CD8-positive, alpha-beta memory T cell (primary cell): ENCODE measurements at regions of chr1 and their contacts with region 1.

Region 1: DNA sequence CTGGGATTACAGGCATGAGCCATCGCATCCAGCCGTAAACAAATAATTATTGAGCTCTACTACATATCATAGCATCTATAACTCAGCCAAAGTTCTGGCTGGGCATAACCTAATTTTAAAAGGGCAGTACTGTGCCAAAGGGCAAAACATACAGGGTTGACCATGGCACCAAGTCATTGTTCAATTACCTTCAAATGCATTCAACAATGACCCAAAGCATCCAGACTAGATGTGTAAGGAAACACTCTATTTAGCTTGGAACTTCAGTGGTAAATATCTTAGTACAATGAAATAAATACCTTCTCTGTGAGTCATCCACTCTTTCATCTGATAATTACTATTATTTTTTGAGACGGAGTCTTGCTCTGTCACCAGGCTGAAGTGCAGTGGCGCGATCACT is 70.0 kb downstream of the NVL start:
- DNase-seq: no peak
- H3K4me3 ChIP-seq: no peak overlapping the region
- H3K4me3 Mint-ChIP-seq: no peak overlapping the region
- H3K27ac ChIP-seq: no peak overlapping the region
- H3K27ac Mint-ChIP-seq: no peak overlapping the region
- H3K4me1 ChIP-seq: peaks cover 13% of the 10 kb centered on the region
- H3K4me1 Mint-ChIP-seq: peaks cover 3 to 20% (median 8%) of the 10 kb centered on the region in 3 donors
- H3K27me3 ChIP-seq: no peaks in the 10 kb centered on the region
- H3K27me3 Mint-ChIP-seq: no peaks in the 10 kb centered on the region

Region 2: DNA sequence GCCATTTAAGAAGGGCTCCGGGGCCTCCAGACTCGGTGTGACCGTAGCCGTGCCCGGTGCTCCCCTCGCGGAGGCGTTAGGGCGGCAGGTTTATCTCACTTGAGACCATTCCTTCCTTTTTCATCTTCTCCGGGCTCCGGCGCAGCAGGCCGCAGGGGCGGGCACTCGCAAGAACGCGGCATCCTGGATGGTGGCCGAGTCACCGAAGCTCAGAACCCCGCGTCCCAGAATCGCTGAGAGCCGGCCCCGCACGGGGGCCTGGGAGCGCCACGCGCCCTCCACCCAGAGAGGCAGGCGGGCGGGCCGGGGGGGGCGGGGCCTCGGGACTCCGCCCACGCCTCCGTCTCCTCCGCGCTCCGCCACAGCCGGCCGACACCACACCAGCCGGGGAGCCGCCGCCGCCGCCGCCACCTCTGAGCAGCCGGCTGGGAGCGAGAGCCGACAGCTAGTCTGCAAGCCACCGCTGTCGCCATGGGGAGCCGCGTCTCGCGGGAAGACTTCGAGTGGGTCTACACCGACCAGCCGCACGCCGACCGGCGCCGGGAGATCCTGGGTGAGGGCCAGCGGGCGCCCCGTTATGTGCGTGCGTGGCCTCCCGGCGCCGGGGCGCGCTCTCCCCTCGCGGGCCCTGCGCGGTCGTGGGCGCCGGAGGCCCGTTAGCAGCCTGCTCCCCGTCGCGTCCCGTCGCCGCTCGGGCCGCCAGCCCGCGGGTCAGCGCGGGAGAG is 76.9 kb before region 1 on chr1 and contains the start of gene DEGS1:
- CTCF ChIA-PET with region 1: no interaction called
- POLR2A ChIA-PET with region 1: interaction called, 13 read pairs
- DNase-seq: peak; percentile 77 to 90 (median 84)
- H3K4me3 ChIP-seq: peak within 1 kb of the TSS; percentile 87
- H3K4me3 Mint-ChIP-seq: peak within 1 kb of the TSS; percentile 87 to 95 (median 92)
- H3K27ac ChIP-seq: peak within 1 kb of the TSS; percentile 81
- H3K27ac Mint-ChIP-seq: peak within 1 kb of the TSS; percentile 90 to 98 (median 94)
- H3K4me1 ChIP-seq: peaks cover 40% of the 10 kb centered on the region
- H3K4me1 Mint-ChIP-seq: peaks cover 36 to 54% (median 52%) of the 10 kb centered on the region in 3 donors
- H3K27me3 ChIP-seq: no peaks in the 10 kb centered on the region
- H3K27me3 Mint-ChIP-seq: no peaks in the 10 kb centered on the region
- total RNA-seq, gene DEGS1: 46.4 to 46.9 TPM

Region 3: GRCh38 chr1:224245188-224245587 is 14.7 kb before region 1 on chr1:
- CTCF ChIA-PET with region 1: no interaction called
- POLR2A ChIA-PET with region 1: no interaction called
- DNase-seq: peak in 2 of 5 donors; percentile 10 to 25
- H3K4me3 ChIP-seq: no peak overlapping the region
- H3K4me3 Mint-ChIP-seq: peak overlapping the region in 4 of 7 donors; percentile 35 to 74 (median 44)
- H3K27ac ChIP-seq: no peak overlapping the region
- H3K27ac Mint-ChIP-seq: peak overlapping the region; percentile 55 to 95 (median 92)
- H3K4me1 ChIP-seq: peaks cover 17% of the 10 kb centered on the region
- H3K4me1 Mint-ChIP-seq: peaks cover 12 to 24% (median 16%) of the 10 kb centered on the region in 3 donors
- H3K27me3 ChIP-seq: no peaks in the 10 kb centered on the region
- H3K27me3 Mint-ChIP-seq: no peaks in the 10 kb centered on the region

Region 4: GRCh38 chr1:224273641-224274040 is 13.7 kb after region 1 on chr1:
- CTCF ChIA-PET with region 1: no interaction called
- POLR2A ChIA-PET with region 1: no interaction called
- DNase-seq: no peak
- H3K4me3 ChIP-seq: no peak overlapping the region
- H3K4me3 Mint-ChIP-seq: no peak overlapping the region
- H3K27ac ChIP-seq: no peak overlapping the region
- H3K27ac Mint-ChIP-seq: no peak overlapping the region
- H3K4me1 ChIP-seq: no peaks in the 10 kb centered on the region
- H3K4me1 Mint-ChIP-seq: no peaks in the 10 kb centered on the region
- H3K27me3 ChIP-seq: no peaks in the 10 kb centered on the region
- H3K27me3 Mint-ChIP-seq: no peaks in the 10 kb centered on the region